ENCODE measurements at regions of chr17 and their contacts with region 1.

Region 1: DNA sequence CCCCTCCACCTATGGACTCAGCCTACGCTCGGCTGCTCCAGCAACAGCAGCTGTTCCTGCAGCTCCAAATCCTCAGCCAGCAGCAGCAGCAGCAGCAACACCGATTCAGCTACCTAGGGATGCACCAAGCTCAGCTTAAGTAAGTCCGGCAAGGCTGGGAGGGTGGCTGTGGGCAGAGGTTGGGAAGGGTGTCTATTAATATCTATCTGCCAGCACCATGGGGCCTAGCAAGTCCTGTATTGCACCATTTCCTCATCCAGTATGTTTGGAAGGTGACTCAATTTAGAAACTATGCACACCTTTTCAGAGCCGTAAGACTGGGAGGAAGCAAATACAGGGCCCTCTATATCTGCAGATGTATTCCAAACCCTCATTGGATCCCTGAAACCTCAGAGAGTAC is 45.0 kb upstream of the ARHGAP44 start:
- DNase-seq: no peak
- ATAC-seq: no peak; a peak in 1 of 6 replicates
- H3K4me3 ChIP-seq: no peak overlapping the region
- H3K27ac ChIP-seq: no peak overlapping the region
- H3K4me1 ChIP-seq: peaks cover 11% of the 10 kb centered on the region
- CTCF ChIP-seq: no peak
- EP300 ChIP-seq: no peak
- POLR2A ChIP-seq: no peak
- RAD21 ChIP-seq: no peak

Region 2: GRCh38 chr17:12180644-12181261 is 563.5 kb before region 1 on chr17:
- CTCF ChIA-PET with region 1: interaction called, 14 read pairs
- POLR2A ChIA-PET with region 1: no interaction called
- DNase-seq: peak; percentile 27 to 74
- ATAC-seq: peak; percentile 67 to 89
- H3K4me3 ChIP-seq: no peak overlapping the region
- H3K27ac ChIP-seq: peak overlapping the region; percentile 15 to 16; a peak in 3 of 6 replicates
- H3K4me1 ChIP-seq: peaks cover 4% of the 10 kb centered on the region; the same call in 2 of the 3 replicates
- CTCF ChIP-seq: peak; percentile 99
- EP300 ChIP-seq: no peak
- POLR2A ChIP-seq: no peak
- RAD21 ChIP-seq: peak; percentile 95 to 98

Region 3: DNA sequence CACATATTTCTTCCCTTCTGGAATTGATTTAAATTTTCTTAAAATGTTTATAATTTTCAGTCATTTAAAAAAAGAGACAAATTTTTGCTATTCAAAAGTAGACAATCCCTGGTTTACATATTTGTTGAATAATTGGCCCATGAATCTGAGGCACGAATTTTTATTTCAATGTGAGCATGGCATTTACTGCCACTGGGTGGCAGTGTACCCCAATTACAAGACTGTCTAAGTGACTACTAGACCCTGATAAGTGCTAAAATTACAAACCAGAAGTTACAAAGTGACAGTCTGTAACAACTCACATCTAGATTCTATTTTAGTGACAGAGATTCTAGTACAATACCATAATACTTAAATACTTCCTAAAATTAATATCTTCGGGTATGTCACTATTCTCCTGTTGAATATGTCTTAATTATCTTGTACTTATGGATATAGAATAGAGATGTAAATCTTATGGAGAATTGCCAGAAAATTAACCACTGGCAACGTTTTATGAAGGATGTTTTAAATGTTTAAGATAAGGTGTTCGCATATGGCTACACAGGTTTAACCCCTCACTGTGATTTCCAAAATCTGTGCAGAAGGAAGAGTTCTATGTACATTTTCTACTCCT is 487.8 kb before region 1 on chr17:
- CTCF ChIA-PET with region 1: interaction called, 12 read pairs
- POLR2A ChIA-PET with region 1: no interaction called
- DNase-seq: peak; percentile 55 to 75
- ATAC-seq: peak; percentile 73 to 91; a peak in 4 of 6 replicates
- H3K4me3 ChIP-seq: no peak overlapping the region
- H3K27ac ChIP-seq: peak overlapping the region; percentile 41 to 54; a peak in 5 of 6 replicates
- H3K4me1 ChIP-seq: peaks cover 9% of the 10 kb centered on the region; the same call in 2 of the 3 replicates
- CTCF ChIP-seq: peak; percentile 98
- EP300 ChIP-seq: no peak
- POLR2A ChIP-seq: no peak
- RAD21 ChIP-seq: peak; percentile 94 to 98

Region 4: GRCh38 chr17:12584727-12585126 is 159.6 kb before region 1 on chr17:
- CTCF ChIA-PET with region 1: no interaction called
- POLR2A ChIA-PET with region 1: no interaction called
- DNase-seq: no peak
- ATAC-seq: no peak
- H3K4me3 ChIP-seq: no peak overlapping the region
- H3K27ac ChIP-seq: no peak overlapping the region
- H3K4me1 ChIP-seq: no peaks in the 10 kb centered on the region
- CTCF ChIP-seq: no peak
- EP300 ChIP-seq: no peak
- POLR2A ChIP-seq: no peak
- RAD21 ChIP-seq: no peak

Region 5: DNA sequence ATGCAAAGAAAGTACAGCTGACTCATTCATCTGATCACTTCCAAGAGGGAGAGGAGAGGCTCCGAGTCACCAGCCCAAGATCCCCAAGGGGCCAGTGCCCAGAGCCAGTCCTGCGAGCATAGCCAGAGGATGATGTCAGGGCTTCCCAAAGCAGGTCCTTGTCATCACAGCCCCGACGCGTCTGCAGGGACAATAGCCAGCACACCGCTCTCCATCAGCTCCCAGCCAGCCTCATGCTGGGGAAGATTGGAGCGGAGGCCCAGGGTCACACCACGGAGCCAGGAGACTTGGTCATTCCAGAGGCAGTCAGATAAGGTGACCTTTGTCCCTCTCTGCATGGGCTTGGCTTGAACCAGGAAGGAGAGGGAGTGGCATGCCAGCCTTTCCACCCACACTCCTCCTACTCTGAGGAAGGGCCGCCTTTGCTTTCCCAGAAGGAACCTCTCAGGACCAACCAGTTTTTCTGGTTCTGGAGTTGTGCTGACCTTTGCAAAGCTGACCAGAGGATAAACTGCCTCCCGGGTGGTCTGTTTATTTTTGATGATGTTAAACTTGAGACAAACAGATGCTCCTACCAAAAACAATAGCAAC is 13.3 kb before region 1 on chr17:
- CTCF ChIA-PET with region 1: interaction called, 17 read pairs
- POLR2A ChIA-PET with region 1: no interaction called
- DNase-seq: peak; percentile 9 to 56
- ATAC-seq: peak; percentile 72 to 82
- H3K4me3 ChIP-seq: no peak overlapping the region
- H3K27ac ChIP-seq: peak overlapping the region; percentile 1 to 59; a peak in 4 of 6 replicates
- H3K4me1 ChIP-seq: peaks cover 28% of the 10 kb centered on the region
- CTCF ChIP-seq: no peak
- EP300 ChIP-seq: no peak
- POLR2A ChIP-seq: no peak
- RAD21 ChIP-seq: no peak

Measured in A549 (cell line).